ENCODE measurements at regions of chr11 and their contacts with region 1.

Region 1: DNA sequence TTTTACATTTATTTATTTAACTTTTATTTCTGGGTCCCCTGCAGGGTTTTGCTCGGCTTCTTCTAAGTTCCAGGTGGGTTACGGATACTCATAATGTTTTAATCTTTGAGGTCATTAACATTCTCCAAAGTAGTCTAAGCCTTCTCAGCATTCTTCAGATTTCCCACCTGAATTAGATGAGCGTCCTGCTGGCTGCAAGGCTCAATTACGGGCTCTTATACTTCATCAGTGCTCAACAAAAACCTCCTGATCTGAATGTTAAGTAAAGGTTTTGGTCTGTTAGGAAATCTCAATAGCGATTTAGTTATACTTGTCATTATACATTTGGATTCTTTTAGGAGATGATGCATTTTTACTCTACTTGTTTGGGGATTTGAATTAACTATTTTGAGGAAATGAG is 27.3 kb upstream of the NFRKB start:
- DNase-seq: no peak
- CTCF ChIP-seq: no peak

Region 2: GRCh38 chr11:129861702-129862113 is 61.0 kb before region 1 on chr11:
- CTCF ChIA-PET with region 1: no interaction called
- POLR2A ChIA-PET with region 1: no interaction called
- DNase-seq: no peak
- CTCF ChIP-seq: no peak

Region 3: GRCh38 chr11:129911298-129911697 is 11.4 kb before region 1 on chr11:
- CTCF ChIA-PET with region 1: interaction called, 17 read pairs
- POLR2A ChIA-PET with region 1: no interaction called
- DNase-seq: no peak
- CTCF ChIP-seq: no peak

Region 4: GRCh38 chr11:130118636-130119387 is 196.1 kb after region 1 on chr11:
- CTCF ChIA-PET with region 1: interaction called, 264 read pairs
- POLR2A ChIA-PET with region 1: no interaction called
- DNase-seq: peak; percentile 32
- CTCF ChIP-seq: no peak

Region 5: DNA sequence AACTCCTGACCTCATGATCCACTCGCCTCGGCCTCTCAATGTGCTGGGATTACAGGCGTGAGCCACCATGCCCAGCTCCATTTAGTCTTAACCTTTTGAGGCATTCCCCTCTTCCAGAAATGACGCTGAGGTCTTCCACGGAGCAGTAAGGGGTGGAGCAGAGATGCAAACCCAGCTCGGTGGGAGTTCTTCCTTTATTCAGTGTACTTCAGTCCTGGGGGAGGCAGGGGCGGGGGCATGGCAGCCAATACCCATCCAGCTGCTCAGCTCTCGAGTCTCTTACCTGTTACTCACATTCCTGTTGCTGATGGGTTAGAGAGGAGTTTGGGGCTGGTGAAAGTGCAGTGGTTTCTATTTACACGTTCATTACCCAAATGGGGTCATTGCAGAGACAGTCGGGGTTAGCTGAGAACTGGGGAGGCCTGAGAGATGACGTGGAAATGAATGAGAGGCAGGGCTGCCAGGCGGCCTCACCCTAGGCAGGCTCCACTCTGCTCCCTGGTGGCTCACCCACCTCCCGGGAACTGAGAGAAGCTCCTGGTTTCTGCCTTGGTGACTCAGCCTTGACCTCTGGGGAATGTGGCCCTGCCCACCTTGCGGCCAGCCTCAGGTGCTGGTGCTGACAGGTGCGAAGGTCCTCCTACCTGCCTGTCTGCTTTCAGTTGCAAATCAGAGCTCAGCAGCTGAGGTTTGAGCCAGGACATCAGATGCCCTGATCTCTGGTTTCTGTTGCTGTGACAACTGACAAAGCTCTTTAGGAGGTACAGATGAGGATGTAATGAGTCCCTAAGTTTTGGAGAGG is 223.5 kb after region 1 on chr11:
- CTCF ChIA-PET with region 1: interaction called, 11 read pairs
- POLR2A ChIA-PET with region 1: no interaction called
- DNase-seq: no peak
- CTCF ChIP-seq: peak; percentile 14